HepG2 (cell line): ENCODE measurements at regions of chr10 and their contacts with region 1.

Region 1: DNA sequence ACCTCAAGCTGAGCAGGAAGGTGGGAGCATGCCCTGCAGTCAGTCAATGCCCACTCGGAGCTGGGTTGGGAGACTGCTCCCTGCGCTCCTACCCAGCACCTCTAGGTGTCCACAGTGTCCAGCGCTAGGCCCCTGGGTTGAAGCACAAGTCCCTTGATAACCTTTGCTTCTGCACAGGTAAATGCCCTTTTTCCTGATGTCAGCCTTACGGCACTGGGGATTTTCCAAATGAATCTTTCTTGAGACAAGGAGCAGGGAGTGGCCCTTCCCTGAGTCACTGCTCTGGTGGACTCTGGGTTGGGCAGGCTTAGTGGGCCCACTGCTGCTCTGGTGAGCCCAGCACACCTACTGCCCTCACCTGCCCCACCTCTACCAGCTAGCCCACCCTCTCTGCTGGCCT is 61.9 kb upstream of the OPN4 start:
- DNase-seq: peak; percentile 23
- ATAC-seq: peak; percentile 98
- H3K4me3 ChIP-seq: no peak overlapping the region
- H3K27ac ChIP-seq: no peak overlapping the region
- H3K4me1 ChIP-seq: peaks cover 13% of the 10 kb centered on the region
- H3K27me3 ChIP-seq: no peaks in the 10 kb centered on the region; a peak in 1 of 5 replicates
- CTCF ChIP-seq: peak; percentile 71
- EP300 ChIP-seq: no peak
- POLR2A ChIP-seq: no peak
- RAD21 ChIP-seq: peak; percentile 49; the same call in 1 of the 2 replicates

Region 2: GRCh38 chr10:86481761-86482160 is 110.7 kb before region 1 on chr10:
- CTCF ChIA-PET with region 1: no interaction called
- POLR2A ChIA-PET with region 1: no interaction called
- in situ Hi-C with region 1: no loop called
- intact Hi-C with region 1: no loop called
- DNase-seq: no peak
- ATAC-seq: no peak
- H3K4me3 ChIP-seq: no peak overlapping the region
- H3K27ac ChIP-seq: no peak overlapping the region
- H3K4me1 ChIP-seq: no peaks in the 10 kb centered on the region
- H3K27me3 ChIP-seq: no peaks in the 10 kb centered on the region
- CTCF ChIP-seq: no peak
- EP300 ChIP-seq: no peak
- POLR2A ChIP-seq: no peak
- RAD21 ChIP-seq: no peak

Region 3: GRCh38 chr10:86500846-86501245 is 91.6 kb before region 1 on chr10:
- CTCF ChIA-PET with region 1: no interaction called
- POLR2A ChIA-PET with region 1: no interaction called
- in situ Hi-C with region 1: no loop called
- intact Hi-C with region 1: no loop called
- DNase-seq: no peak
- ATAC-seq: no peak
- H3K4me3 ChIP-seq: no peak overlapping the region
- H3K27ac ChIP-seq: no peak overlapping the region
- H3K4me1 ChIP-seq: peaks cover 17% of the 10 kb centered on the region; the same call in 1 of the 2 replicates
- H3K27me3 ChIP-seq: no peaks in the 10 kb centered on the region
- CTCF ChIP-seq: no peak
- EP300 ChIP-seq: no peak
- POLR2A ChIP-seq: no peak
- RAD21 ChIP-seq: no peak

Region 4: GRCh38 chr10:86644152-86644793 is 51.9 kb after region 1 on chr10:
- CTCF ChIA-PET with region 1: no interaction called
- POLR2A ChIA-PET with region 1: no interaction called
- in situ Hi-C with region 1: no loop called
- intact Hi-C with region 1: loop called (anchors 5 kb)
- DNase-seq: peak; percentile 10
- ATAC-seq: peak; percentile 83
- H3K4me3 ChIP-seq: no peak overlapping the region
- H3K27ac ChIP-seq: no peak overlapping the region
- H3K4me1 ChIP-seq: no peaks in the 10 kb centered on the region
- H3K27me3 ChIP-seq: peaks cover 3 to 16% of the 10 kb centered on the region in 2 experiments; a peak in 3 of 5 replicates
- CTCF ChIP-seq: peak; percentile 53
- EP300 ChIP-seq: no peak
- POLR2A ChIP-seq: no peak
- RAD21 ChIP-seq: no peak

Region 5: GRCh38 chr10:86688398-86688921 is 96.0 kb after region 1 on chr10:
- CTCF ChIA-PET with region 1: no interaction called
- POLR2A ChIA-PET with region 1: no interaction called
- in situ Hi-C with region 1: no loop called
- intact Hi-C with region 1: loop called (anchors 5 kb)
- DNase-seq: peak; percentile 48
- ATAC-seq: peak; percentile 67
- H3K4me3 ChIP-seq: no peak overlapping the region
- H3K27ac ChIP-seq: no peak overlapping the region
- H3K4me1 ChIP-seq: no peaks in the 10 kb centered on the region
- H3K27me3 ChIP-seq: peaks cover 9 to 51% of the 10 kb centered on the region in 2 experiments; a peak in 4 of 5 replicates
- CTCF ChIP-seq: peak; percentile 85
- EP300 ChIP-seq: no peak
- POLR2A ChIP-seq: no peak
- RAD21 ChIP-seq: peak; percentile 56

Region 6: GRCh38 chr10:86815035-86815617 is 222.7 kb after region 1 on chr10:
- CTCF ChIA-PET with region 1: no interaction called
- POLR2A ChIA-PET with region 1: no interaction called
- in situ Hi-C with region 1: no loop called
- intact Hi-C with region 1: no loop called
- DNase-seq: no peak
- ATAC-seq: no peak
- H3K4me3 ChIP-seq: no peak overlapping the region
- H3K27ac ChIP-seq: no peak overlapping the region
- H3K4me1 ChIP-seq: no peaks in the 10 kb centered on the region
- H3K27me3 ChIP-seq: no peaks in the 10 kb centered on the region
- CTCF ChIP-seq: no peak
- EP300 ChIP-seq: no peak
- POLR2A ChIP-seq: no peak
- RAD21 ChIP-seq: no peak